Activated CD4-positive, alpha-beta memory T cell treated with anti-CD3 and anti-CD28 coated beads, Interleukin-2, amount 10 ng/mL, durations not matched to agents 7 days and 5 days (primary cell): ENCODE measurements at regions of chr5 and their contacts with region 1.

Region 1: GRCh38 chr5:37412515-37413277 is 33.6 kb downstream of the WDR70 start:
- DNase-seq: peak; percentile 31
- H3K4me3 Mint-ChIP-seq: no peak overlapping the region
- H3K27ac Mint-ChIP-seq: no peak overlapping the region
- H3K4me1 Mint-ChIP-seq: no peaks in the 10 kb centered on the region
- H3K27me3 Mint-ChIP-seq: no peaks in the 10 kb centered on the region

Region 2: GRCh38 chr5:37370864-37371726 is 41.6 kb before region 1 on chr5 and contains the start of gene NUP155:
- CTCF ChIA-PET with region 1: interaction called, 13 read pairs
- POLR2A ChIA-PET with region 1: no interaction called
- DNase-seq: peak; percentile 90
- H3K4me3 Mint-ChIP-seq: peak within 1 kb of the TSS; percentile 98
- H3K27ac Mint-ChIP-seq: peak within 1 kb of the TSS; percentile 93
- H3K4me1 Mint-ChIP-seq: peaks cover 39% of the 10 kb centered on the region
- H3K27me3 Mint-ChIP-seq: no peaks in the 10 kb centered on the region
- total RNA-seq, gene NUP155: 41.3 to 45.9 TPM

Region 3: GRCh38 chr5:37400501-37400900 is 12.2 kb before region 1 on chr5:
- CTCF ChIA-PET with region 1: interaction called, 10 read pairs
- POLR2A ChIA-PET with region 1: no interaction called
- DNase-seq: no peak
- H3K4me3 Mint-ChIP-seq: no peak overlapping the region
- H3K27ac Mint-ChIP-seq: no peak overlapping the region
- H3K4me1 Mint-ChIP-seq: no peaks in the 10 kb centered on the region
- H3K27me3 Mint-ChIP-seq: no peaks in the 10 kb centered on the region

Region 4: DNA sequence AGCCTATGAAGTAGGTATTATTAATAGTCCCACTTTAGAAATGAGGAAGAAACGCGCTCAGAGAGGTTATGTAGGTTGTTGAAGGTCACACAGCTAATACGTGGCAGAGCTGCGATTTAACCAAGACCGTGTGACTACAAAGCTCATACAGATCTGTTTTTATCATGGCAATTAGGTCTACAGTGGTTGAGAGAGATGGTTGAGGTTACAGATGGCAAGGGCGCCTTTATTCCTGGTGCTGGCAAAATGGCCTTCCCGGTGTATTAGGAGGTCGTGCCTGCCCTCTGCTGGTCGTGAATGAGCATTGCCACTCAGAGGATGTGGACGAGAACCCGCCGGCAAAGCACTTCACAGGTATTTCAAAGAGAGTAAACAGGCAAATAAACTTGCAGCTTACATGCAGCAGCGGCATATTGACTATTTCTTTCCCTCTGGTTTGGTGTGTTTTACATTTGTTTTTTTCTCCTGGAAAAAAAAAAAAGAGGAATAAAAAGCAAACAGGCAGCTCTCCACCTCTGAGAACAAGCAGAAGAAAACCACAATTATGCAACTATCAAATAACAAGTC is 780.4 kb after region 1 on chr5:
- CTCF ChIA-PET with region 1: interaction called, 33 read pairs
- POLR2A ChIA-PET with region 1: no interaction called
- DNase-seq: peak; percentile 64
- H3K4me3 Mint-ChIP-seq: no peak overlapping the region
- H3K27ac Mint-ChIP-seq: no peak overlapping the region
- H3K4me1 Mint-ChIP-seq: no peaks in the 10 kb centered on the region
- H3K27me3 Mint-ChIP-seq: peaks cover 19% of the 10 kb centered on the region